H1 (cell line): ENCODE measurements at regions of chr6 and their contacts with region 1.

Region 1: GRCh38 chr6:41367700-41368099 is 32.3 kb downstream of the NCR2 start:
- DNase-seq: peak in 1 of 2 experiments; percentile 79
- H3K4me3 ChIP-seq: no peak overlapping the region
- H3K27ac ChIP-seq: no peak overlapping the region
- H3K4me1 ChIP-seq: peaks cover 3 to 22% (median 11%) of the 10 kb centered on the region in 4 experiments
- H3K27me3 ChIP-seq: peaks cover 31 to 38% (median 38%) of the 10 kb centered on the region in 4 experiments
- CTCF ChIP-seq: peak in 2 of 3 experiments; percentile 97; a peak in 3 of 4 replicates
- EP300 ChIP-seq: no peak
- POLR2A ChIP-seq: no peak
- RAD21 ChIP-seq: peak; percentile 98 to 99

Region 2: DNA sequence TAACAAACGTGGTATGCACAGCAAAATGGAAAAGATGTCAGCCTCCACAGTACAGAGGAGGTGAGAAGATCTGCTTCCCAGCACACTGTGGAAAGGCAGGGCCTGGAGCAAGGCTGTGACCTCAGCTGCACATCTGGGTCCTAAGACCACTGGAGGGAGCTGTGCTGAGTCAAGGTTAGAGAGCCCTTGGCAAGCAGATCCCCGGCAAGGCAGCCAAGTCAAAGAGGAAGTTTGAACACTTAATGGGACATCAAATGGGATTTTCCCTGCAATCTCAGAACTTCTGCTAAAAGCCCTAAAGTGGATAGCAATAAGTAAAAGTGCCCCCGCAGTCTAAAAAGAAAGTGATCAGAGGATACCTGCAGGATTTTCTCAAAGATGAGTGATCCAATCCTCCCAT is 368.1 kb before region 1 on chr6:
- CTCF ChIA-PET with region 1: no interaction called
- POLR2A ChIA-PET with region 1: no interaction called
- DNase-seq: peak; percentile 53 to 59
- H3K4me3 ChIP-seq: no peak overlapping the region
- H3K27ac ChIP-seq: no peak overlapping the region
- H3K4me1 ChIP-seq: peaks cover 12 to 32% (median 23%) of the 10 kb centered on the region in 4 experiments
- H3K27me3 ChIP-seq: no peaks in the 10 kb centered on the region; a peak in 2 of 7 replicates
- CTCF ChIP-seq: peak; percentile 58 to 83 (median 75)
- EP300 ChIP-seq: no peak
- POLR2A ChIP-seq: no peak
- RAD21 ChIP-seq: peak; percentile 15 to 62; a peak in 3 of 4 replicates

Region 3: DNA sequence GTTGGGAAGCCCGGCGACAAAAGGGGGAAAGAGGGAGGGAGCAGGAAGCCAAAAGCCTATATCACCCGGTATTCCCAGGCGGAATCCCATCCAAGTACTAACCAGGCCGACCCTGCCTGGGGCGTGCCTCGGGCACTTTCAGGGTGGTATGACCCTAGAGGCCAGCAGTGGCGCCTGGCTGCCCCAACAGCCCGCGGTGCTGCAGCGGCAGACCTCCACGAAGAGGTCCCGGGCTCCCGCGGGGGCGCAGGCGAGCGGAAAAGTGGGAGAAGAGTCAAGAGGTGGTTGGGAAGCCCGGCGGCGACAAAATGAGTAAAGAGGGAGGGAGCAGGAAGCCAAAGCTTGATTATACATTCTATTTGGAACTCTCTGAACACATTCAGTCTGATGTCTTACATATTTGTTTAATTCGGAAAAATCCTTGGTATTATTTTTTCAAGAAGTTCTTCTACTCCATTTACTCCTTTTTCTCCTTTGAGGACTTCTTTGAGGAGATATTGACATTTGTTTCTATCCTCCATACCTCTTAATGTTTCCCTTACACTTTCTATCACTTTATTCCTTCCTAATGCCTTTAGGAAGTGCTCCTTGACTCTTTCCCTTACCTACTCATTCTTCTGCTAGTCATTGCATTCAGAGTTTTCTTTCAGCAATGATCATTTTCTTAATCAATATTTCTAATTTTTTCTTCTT is 128.1 kb before region 1 on chr6:
- CTCF ChIA-PET with region 1: no interaction called
- POLR2A ChIA-PET with region 1: no interaction called
- DNase-seq: peak in 1 of 2 experiments; percentile 76
- H3K4me3 ChIP-seq: peak overlapping the region; percentile 33 to 66 (median 44); a peak in 7 of 8 replicates
- H3K27ac ChIP-seq: no peak overlapping the region
- H3K4me1 ChIP-seq: peaks cover 0 to 4% (median 0%) of the 10 kb centered on the region in 4 experiments; a peak in 2 of 7 replicates
- H3K27me3 ChIP-seq: no peaks in the 10 kb centered on the region; a peak in 1 of 7 replicates
- CTCF ChIP-seq: peak; percentile 15 to 29 (median 20); a peak in 3 of 4 replicates
- EP300 ChIP-seq: no peak
- POLR2A ChIP-seq: no peak
- RAD21 ChIP-seq: peak in 1 of 2 experiments; percentile 4; a peak in 1 of 4 replicates

Region 4: DNA sequence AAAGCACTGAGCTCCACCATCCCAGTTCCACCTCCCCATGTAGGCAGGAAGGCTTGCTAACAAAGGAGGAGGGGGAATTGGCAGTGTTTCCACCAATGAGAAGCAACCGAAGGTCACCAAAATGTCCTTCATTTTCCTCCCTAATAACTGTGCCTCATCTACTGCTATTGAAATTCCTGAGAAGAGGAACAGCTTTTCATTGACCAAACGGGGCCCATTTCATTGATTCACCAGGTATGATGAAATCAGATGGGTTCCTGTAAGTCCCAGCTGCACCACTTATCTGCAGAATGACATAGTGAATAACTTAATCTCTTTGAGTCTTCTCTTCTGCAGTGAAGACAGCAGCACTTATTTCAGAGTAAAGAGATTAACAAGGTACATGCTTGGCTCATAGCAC is 98.5 kb before region 1 on chr6:
- CTCF ChIA-PET with region 1: no interaction called
- POLR2A ChIA-PET with region 1: no interaction called
- DNase-seq: no peak
- H3K4me3 ChIP-seq: no peak overlapping the region
- H3K27ac ChIP-seq: no peak overlapping the region
- H3K4me1 ChIP-seq: no peaks in the 10 kb centered on the region
- H3K27me3 ChIP-seq: no peaks in the 10 kb centered on the region; a peak in 2 of 7 replicates
- CTCF ChIP-seq: no peak
- EP300 ChIP-seq: no peak
- POLR2A ChIP-seq: no peak
- RAD21 ChIP-seq: no peak

Region 5: GRCh38 chr6:41344876-41345275 is 22.8 kb before region 1 on chr6:
- CTCF ChIA-PET with region 1: interaction called, 12 read pairs
- POLR2A ChIA-PET with region 1: no interaction called
- DNase-seq: peak in 1 of 2 experiments; percentile 23
- H3K4me3 ChIP-seq: no peak overlapping the region
- H3K27ac ChIP-seq: no peak overlapping the region
- H3K4me1 ChIP-seq: 0 out of 7 replicates have a peak, but pooled peaks cover 0 to 2% (median 0%) of the 10 kb centered on the region in 4 experiments
- H3K27me3 ChIP-seq: no peaks in the 10 kb centered on the region; a peak in 3 of 7 replicates
- CTCF ChIP-seq: no peak
- EP300 ChIP-seq: no peak
- POLR2A ChIP-seq: no peak
- RAD21 ChIP-seq: no peak

Region 6: DNA sequence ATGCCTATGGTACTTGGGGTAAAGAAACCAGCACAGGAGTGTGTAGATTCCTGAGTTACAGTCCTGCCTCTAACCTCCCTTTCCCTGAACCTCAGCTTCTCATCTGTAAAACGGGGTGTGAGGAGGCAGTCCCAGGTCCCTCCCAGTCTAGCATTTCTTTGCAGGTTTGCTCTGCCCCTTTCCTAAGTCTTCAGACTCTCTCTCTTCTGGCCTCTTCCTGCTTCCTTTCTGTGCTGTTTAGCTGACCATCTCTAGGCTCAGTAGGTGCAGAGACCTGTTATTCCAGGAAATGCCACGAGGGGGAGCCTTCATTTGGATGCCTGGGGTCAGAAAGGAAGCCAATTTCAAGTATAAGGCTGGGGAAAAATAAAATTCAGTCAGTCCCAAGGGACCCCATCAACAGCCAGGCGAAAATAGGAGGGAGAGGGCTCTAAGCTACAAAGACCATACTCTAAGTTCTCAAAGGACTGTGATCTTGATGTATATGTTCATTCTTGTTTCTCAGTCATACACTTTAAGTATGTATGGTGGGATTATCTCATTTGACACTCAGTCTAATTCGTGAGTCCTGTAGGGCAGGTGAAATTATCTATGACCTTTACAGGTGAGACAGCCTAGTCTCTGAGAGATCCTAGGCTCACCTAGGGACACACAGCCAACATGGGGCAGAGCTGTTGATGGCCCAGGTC is 56.8 kb after region 1 on chr6:
- CTCF ChIA-PET with region 1: interaction called, 70 read pairs
- POLR2A ChIA-PET with region 1: no interaction called
- DNase-seq: peak in 1 of 2 experiments; percentile 97
- H3K4me3 ChIP-seq: no peak overlapping the region
- H3K27ac ChIP-seq: no peak overlapping the region
- H3K4me1 ChIP-seq: peaks cover 3 to 29% (median 8%) of the 10 kb centered on the region in 4 experiments
- H3K27me3 ChIP-seq: peaks cover 24 to 62% (median 54%) of the 10 kb centered on the region in 4 experiments
- CTCF ChIP-seq: peak; percentile 34 to 88 (median 85)
- EP300 ChIP-seq: no peak
- POLR2A ChIP-seq: no peak
- RAD21 ChIP-seq: peak; percentile 72 to 82

Region 7: GRCh38 chr6:41551086-41551700 is 183.5 kb after region 1 on chr6:
- CTCF ChIA-PET with region 1: interaction called, 14 read pairs
- POLR2A ChIA-PET with region 1: no interaction called
- DNase-seq: no peak
- H3K4me3 ChIP-seq: no peak overlapping the region
- H3K27ac ChIP-seq: no peak overlapping the region
- H3K4me1 ChIP-seq: peaks cover 41 to 70% (median 50%) of the 10 kb centered on the region in 4 experiments
- H3K27me3 ChIP-seq: peaks cover 20 to 78% (median 73%) of the 10 kb centered on the region in 4 experiments
- CTCF ChIP-seq: no peak
- EP300 ChIP-seq: no peak
- POLR2A ChIP-seq: no peak
- RAD21 ChIP-seq: no peak

Region 8: GRCh38 chr6:41644297-41644879 is 276.7 kb after region 1 on chr6:
- CTCF ChIA-PET with region 1: interaction called, 14 read pairs
- POLR2A ChIA-PET with region 1: no interaction called
- DNase-seq: peak in 1 of 2 experiments; percentile 55
- H3K4me3 ChIP-seq: 0 out of 8 replicates have a peak overlapping the region, but pooled peaks of 2 of the 4 experiments have one; percentile 9 to 14
- H3K27ac ChIP-seq: no peak overlapping the region
- H3K4me1 ChIP-seq: peaks cover 8 to 52% (median 37%) of the 10 kb centered on the region in 4 experiments
- H3K27me3 ChIP-seq: peaks cover 0 to 26% (median 13%) of the 10 kb centered on the region in 4 experiments; a peak in 5 of 7 replicates
- CTCF ChIP-seq: no peak
- EP300 ChIP-seq: no peak
- POLR2A ChIP-seq: no peak
- RAD21 ChIP-seq: no peak

Region 9: DNA sequence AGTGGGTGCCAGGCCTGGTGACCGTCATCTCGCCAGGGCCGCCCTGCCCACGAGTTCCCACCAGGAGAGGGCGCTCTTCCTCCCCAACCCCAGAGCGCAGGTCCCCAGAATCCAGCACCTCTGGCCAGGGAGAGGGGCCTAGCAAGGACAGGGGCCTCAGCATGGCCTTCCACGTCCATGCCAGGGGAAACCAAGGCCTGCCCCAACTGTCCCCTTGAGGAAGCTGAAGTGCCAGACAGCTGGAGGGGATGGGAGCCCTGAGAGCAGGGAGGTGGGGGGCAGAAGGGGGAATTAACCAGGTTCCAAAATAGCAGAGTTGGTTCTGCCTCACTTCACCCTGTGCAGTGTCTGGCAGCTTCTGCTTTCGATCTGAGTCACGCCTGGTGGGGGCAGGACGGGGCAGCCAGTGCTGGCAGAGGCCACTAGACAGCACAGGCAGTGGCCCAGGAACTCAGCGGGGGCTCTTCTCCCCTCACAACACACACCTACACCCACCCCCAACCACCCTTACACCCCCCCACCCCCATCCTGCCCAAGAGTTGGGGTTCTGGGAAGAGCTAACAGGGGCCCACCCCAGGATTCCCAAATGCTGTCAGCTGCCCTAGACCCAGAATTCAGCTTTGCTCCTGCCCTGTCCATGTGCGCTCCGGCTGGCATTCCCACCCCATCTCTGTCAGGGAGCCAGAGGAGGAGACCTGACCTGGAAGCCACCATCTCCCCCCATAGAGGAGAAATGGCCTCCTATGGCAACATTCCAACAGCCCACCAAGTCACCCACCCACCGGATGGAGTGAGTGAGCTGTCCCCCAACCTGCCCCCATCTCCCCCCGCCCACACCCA is 338.5 kb after region 1 on chr6:
- CTCF ChIA-PET with region 1: interaction called, 14 read pairs
- POLR2A ChIA-PET with region 1: no interaction called
- DNase-seq: peak; percentile 56 to 92
- H3K4me3 ChIP-seq: no peak overlapping the region
- H3K27ac ChIP-seq: no peak overlapping the region
- H3K4me1 ChIP-seq: peaks cover 0 to 8% (median 3%) of the 10 kb centered on the region in 4 experiments; a peak in 4 of 7 replicates
- H3K27me3 ChIP-seq: no peaks in the 10 kb centered on the region; a peak in 1 of 7 replicates
- CTCF ChIP-seq: peak in 2 of 3 experiments; percentile 92 to 97; a peak in 3 of 4 replicates
- EP300 ChIP-seq: no peak
- POLR2A ChIP-seq: no peak
- RAD21 ChIP-seq: peak; percentile 68 to 81

Region 10: GRCh38 chr6:42142118-42142931 is 774.6 kb after region 1 on chr6 and contains the start of gene C6orf132:
- CTCF ChIA-PET with region 1: no interaction called
- POLR2A ChIA-PET with region 1: no interaction called
- DNase-seq: peak; percentile 46 to 86
- H3K4me3 ChIP-seq: peak within 1 kb of the TSS; percentile 78 to 94 (median 90)
- H3K27ac ChIP-seq: peak within 1 kb of the TSS; percentile 80
- H3K4me1 ChIP-seq: peaks cover 17 to 32% (median 30%) of the 10 kb centered on the region in 4 experiments
- H3K27me3 ChIP-seq: no peaks in the 10 kb centered on the region
- CTCF ChIP-seq: no peak
- EP300 ChIP-seq: 0 out of 3 replicates have a peak, but pooled peaks of 1 of the 2 experiments have one; percentile 62
- POLR2A ChIP-seq: peak in 1 of 2 experiments; percentile 81; a peak in 2 of 3 replicates
- RAD21 ChIP-seq: no peak
- total RNA-seq, gene C6orf132: 62.2 and 64.0 TPM in 2 replicates